Activated CD4-positive, alpha-beta T cell treated with anti-CD3 and anti-CD28 coated beads for 36 hours (primary cell): ENCODE measurements at regions of chr6 and their contacts with region 1.

Region 1: DNA sequence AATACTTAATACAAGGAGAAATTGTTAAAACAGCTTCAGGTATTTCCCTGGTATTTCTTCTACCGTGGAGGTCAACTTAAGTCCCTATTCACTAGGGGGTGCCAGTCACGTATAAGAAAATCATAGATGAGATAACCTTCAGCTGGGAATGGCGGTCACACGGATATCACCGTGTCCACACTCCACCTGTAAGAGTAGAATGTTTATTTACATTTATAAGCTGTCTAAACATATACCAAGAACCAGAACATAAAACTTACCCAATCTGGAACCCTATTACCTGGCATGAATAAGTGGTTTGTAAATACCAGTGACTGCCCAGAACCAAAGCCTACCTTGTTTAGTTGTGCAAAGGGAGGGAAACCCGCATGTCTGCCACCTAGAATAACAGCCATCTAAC is 1.9 kb upstream of the ELOVL4 start:
- DNase-seq: peak; percentile 83
- ATAC-seq: peak; percentile 33
- H3K4me3 Mint-ChIP-seq: no peak overlapping the region
- H3K27ac Mint-ChIP-seq: no peak overlapping the region
- H3K4me1 Mint-ChIP-seq: peaks cover 29% of the 10 kb centered on the region
- H3K27me3 Mint-ChIP-seq: peaks cover 22% of the 10 kb centered on the region

Region 2: GRCh38 chr6:79506251-79506650 is 443.0 kb before region 1 on chr6:
- CTCF ChIA-PET with region 1: no interaction called
- POLR2A ChIA-PET with region 1: no interaction called
- intact Hi-C with region 1: no loop called
- DNase-seq: no peak
- ATAC-seq: no peak
- H3K4me3 Mint-ChIP-seq: no peak overlapping the region
- H3K27ac Mint-ChIP-seq: no peak overlapping the region
- H3K4me1 Mint-ChIP-seq: no peaks in the 10 kb centered on the region
- H3K27me3 Mint-ChIP-seq: no peaks in the 10 kb centered on the region

Region 3: GRCh38 chr6:79964607-79965081 is 15.4 kb after region 1 on chr6:
- CTCF ChIA-PET with region 1: interaction called, 15 read pairs
- POLR2A ChIA-PET with region 1: no interaction called
- intact Hi-C with region 1: no loop called
- DNase-seq: peak; percentile 20
- ATAC-seq: peak; percentile 74
- H3K4me3 Mint-ChIP-seq: no peak overlapping the region
- H3K27ac Mint-ChIP-seq: no peak overlapping the region
- H3K4me1 Mint-ChIP-seq: peaks cover 3% of the 10 kb centered on the region
- H3K27me3 Mint-ChIP-seq: no peaks in the 10 kb centered on the region

Region 4: GRCh38 chr6:80094017-80094416 is 144.8 kb after region 1 on chr6:
- CTCF ChIA-PET with region 1: interaction called, 71 read pairs
- POLR2A ChIA-PET with region 1: no interaction called
- intact Hi-C with region 1: loop called (anchors 1 kb)
- DNase-seq: peak; percentile 23
- ATAC-seq: no peak
- H3K4me3 Mint-ChIP-seq: no peak overlapping the region
- H3K27ac Mint-ChIP-seq: no peak overlapping the region
- H3K4me1 Mint-ChIP-seq: peaks cover 2% of the 10 kb centered on the region
- H3K27me3 Mint-ChIP-seq: peaks cover 2% of the 10 kb centered on the region

Region 5: DNA sequence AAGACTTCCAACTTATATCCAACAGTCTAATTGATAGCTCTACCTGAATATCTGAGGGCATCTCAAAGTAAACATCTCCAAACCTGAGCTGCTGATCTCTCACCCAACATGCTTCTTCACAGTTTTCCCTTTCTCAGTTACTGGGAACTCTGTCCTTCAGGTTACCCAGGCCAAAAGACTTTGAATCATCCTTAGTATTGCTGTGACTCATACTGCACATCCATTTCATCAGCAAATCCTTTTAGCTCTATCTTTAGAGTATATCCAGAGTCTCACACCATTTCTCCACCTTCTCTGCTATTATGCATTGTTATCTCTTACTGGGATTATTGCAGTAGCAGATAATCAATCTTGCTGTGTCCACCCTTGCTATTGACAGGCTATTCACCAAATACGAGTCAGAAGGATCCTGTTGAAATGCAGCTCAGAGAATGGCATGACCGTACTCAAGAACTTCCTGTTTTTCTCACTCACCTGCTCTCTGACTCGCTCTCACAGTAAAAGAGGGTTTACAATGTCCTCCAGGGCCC is 214.5 kb after region 1 on chr6:
- CTCF ChIA-PET with region 1: interaction called, 3 read pairs
- POLR2A ChIA-PET with region 1: no interaction called
- intact Hi-C with region 1: loop called in 1 of 2 experiments (anchors 5 kb)
- DNase-seq: peak; percentile 13
- ATAC-seq: peak; percentile 80
- H3K4me3 Mint-ChIP-seq: no peak overlapping the region
- H3K27ac Mint-ChIP-seq: no peak overlapping the region
- H3K4me1 Mint-ChIP-seq: peaks cover 2% of the 10 kb centered on the region
- H3K27me3 Mint-ChIP-seq: no peaks in the 10 kb centered on the region